ENCODE measurements at regions of chrX and their contacts with region 1.

Region 1: DNA sequence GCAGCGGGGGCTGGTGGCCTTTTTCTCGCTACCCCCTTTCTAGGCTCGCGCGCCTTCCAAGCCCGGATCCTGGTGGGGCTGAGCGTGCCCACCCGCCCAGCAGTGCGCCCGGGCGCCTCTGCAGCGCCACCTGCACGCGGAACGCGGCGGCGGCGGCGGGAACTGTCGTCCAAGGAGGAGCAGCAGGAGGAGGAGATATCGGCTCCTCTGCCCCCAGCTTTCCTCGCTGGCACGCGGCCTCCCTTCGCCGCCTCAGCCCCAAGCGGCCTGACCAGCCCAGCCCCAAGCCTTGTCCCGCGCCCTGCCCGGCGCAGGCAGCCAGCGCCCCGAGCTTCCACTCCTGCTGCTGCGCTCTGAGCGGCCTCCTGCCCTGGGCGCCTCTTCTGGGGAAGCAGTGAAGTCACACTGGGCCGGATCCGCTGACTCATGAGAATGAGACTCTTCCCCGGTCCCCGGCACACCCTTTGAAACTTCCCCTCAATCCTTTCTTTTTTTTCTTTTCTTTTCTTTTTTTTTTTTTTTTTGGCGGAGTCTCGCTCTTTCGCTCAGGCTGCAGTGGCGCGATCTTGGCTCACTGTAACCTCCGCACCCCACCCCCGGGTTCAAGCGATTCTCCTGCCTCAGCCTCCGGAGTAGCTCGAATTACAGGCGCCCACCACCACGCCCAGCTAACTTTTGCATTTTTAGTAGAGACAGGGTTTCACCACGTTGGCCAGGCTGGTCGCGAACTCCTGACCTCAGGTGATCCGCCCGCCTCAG is 10.6 kb upstream of the ELF4 start:
- DNase-seq: peak; percentile 32 to 81 (median 65)
- ATAC-seq: peak; percentile 86
- H3K4me3 ChIP-seq: peak overlapping the region; percentile 46 to 48
- H3K4me3 Mint-ChIP-seq: peak overlapping the region; percentile 73
- H3K27ac ChIP-seq: no peak overlapping the region
- H3K27ac Mint-ChIP-seq: no peak overlapping the region
- H3K4me1 ChIP-seq: no peaks in the 10 kb centered on the region
- H3K4me1 Mint-ChIP-seq: peaks cover 7% of the 10 kb centered on the region
- H3K27me3 ChIP-seq: no peaks in the 10 kb centered on the region
- H3K27me3 Mint-ChIP-seq: no peaks in the 10 kb centered on the region
- CTCF ChIP-seq: peak; percentile 73

Region 2: GRCh38 chrX:130091958-130092522 is 28.9 kb before region 1 on chrX:
- CTCF ChIA-PET with region 1: interaction called, 9 read pairs
- POLR2A ChIA-PET with region 1: interaction called, 7 read pairs
- intact Hi-C with region 1: loop called in 1 of 2 experiments (anchors 1 kb)
- DNase-seq: peak; percentile 69 to 95 (median 83)
- ATAC-seq: peak; percentile 97
- H3K4me3 ChIP-seq: peak overlapping the region; percentile 50 to 58
- H3K4me3 Mint-ChIP-seq: peak overlapping the region; percentile 81
- H3K27ac ChIP-seq: peak overlapping the region; percentile 54 to 70
- H3K27ac Mint-ChIP-seq: peak overlapping the region; percentile 93
- H3K4me1 ChIP-seq: peaks cover 67% of the 10 kb centered on the region
- H3K4me1 Mint-ChIP-seq: peaks cover 58% of the 10 kb centered on the region
- H3K27me3 ChIP-seq: no peaks in the 10 kb centered on the region
- H3K27me3 Mint-ChIP-seq: no peaks in the 10 kb centered on the region
- CTCF ChIP-seq: no peak

Region 3: DNA sequence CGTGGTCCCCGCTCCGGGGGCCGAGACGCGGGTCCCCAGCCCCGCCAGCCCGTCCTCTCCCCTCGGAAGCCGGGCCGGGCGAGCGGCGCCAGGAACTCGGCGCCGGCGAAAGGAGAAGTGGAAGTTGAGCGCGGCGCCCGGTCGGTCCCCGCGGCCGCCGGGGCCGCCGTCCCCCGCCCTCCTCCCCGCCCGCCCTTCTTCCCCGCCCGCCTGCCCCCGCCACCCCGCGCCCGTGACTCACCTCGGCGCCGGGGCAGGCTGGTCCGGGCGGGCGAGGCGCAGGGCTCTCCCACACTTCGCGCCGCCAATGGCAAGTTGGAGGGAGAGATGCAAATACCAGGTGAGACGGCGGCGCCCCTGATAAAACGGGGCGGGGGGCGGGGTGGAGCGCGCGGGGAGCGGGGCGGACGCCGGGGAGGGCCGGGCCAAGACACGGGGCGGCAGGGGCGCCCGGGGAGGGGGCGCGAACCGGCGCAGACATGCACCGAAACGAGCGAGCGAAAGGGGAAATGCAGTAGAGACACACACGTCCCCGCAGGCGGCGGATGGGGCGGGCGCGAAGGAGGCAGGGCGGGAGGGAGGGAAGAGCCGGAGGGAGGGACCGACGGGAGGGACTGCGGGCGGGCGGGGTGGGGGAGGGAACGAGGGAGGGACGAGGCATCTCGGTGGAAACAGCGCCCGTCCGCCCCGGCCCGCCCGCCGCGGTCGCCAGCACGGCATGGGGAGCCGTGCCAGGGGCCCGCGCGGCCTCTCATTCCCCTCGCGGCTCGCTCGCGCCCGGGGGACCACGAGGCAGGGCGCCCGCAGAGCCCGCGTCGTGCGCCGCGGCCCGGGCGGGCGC is 10.3 kb before region 1 on chrX and contains the start of gene ELF4:
- CTCF ChIA-PET with region 1: interaction called, 17 read pairs
- POLR2A ChIA-PET with region 1: no interaction called
- intact Hi-C with region 1: no loop called
- DNase-seq: peak in 8 of 9 experiments; percentile 38 to 83 (median 65)
- ATAC-seq: peak; percentile 75
- H3K4me3 ChIP-seq: peak within 1 kb of the TSS; percentile 54 to 58
- H3K4me3 Mint-ChIP-seq: peak within 1 kb of the TSS; percentile 87
- H3K27ac ChIP-seq: peak within 1 kb of the TSS; percentile 35 to 73
- H3K27ac Mint-ChIP-seq: peak within 1 kb of the TSS; percentile 94
- H3K4me1 ChIP-seq: peaks cover 10% of the 10 kb centered on the region
- H3K4me1 Mint-ChIP-seq: peaks cover 30% of the 10 kb centered on the region
- H3K27me3 ChIP-seq: no peaks in the 10 kb centered on the region
- H3K27me3 Mint-ChIP-seq: no peaks in the 10 kb centered on the region
- CTCF ChIP-seq: no peak
- total RNA-seq, gene ELF4: 11.7 to 13.8 TPM

Region 4: GRCh38 chrX:130165703-130166502 is 45.0 kb after region 1 on chrX and contains the start of gene AIFM1:
- CTCF ChIA-PET with region 1: no interaction called
- POLR2A ChIA-PET with region 1: no interaction called
- intact Hi-C with region 1: loop called in 1 of 2 experiments (anchors 2 kb)
- DNase-seq: peak; percentile 68 to 95 (median 85)
- ATAC-seq: peak; percentile 87
- H3K4me3 ChIP-seq: peak within 1 kb of the TSS; percentile 57 to 74
- H3K4me3 Mint-ChIP-seq: peak within 1 kb of the TSS; percentile 90
- H3K27ac ChIP-seq: peak within 1 kb of the TSS; percentile 54 to 80
- H3K27ac Mint-ChIP-seq: peak within 1 kb of the TSS; percentile 90
- H3K4me1 ChIP-seq: peaks cover 17% of the 10 kb centered on the region
- H3K4me1 Mint-ChIP-seq: peaks cover 42% of the 10 kb centered on the region
- H3K27me3 ChIP-seq: no peaks in the 10 kb centered on the region
- H3K27me3 Mint-ChIP-seq: no peaks in the 10 kb centered on the region
- CTCF ChIP-seq: no peak
- total RNA-seq, gene AIFM1: 4.4 to 4.9 TPM

Region 5: DNA sequence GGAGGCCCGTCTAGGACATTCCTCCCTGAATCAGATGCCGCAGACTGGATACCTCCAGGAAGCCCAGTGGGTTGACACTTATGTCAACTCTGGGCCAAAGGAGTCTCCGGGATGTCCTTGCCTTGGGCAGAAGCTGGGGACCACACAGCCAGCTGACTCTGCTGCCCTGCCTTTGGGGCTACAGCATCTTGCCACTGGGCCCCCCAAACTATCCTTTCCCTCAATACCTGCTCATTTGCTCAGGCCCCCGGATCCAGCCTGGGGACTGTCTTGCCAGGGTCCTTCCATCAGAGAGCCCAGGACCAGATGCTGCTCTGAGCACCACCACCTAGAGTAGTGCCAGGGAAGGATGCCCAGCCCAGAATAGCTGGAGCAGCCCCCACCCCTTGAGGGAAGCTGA is 69.9 kb after region 1 on chrX:
- CTCF ChIA-PET with region 1: interaction called, 6 read pairs
- POLR2A ChIA-PET with region 1: no interaction called
- intact Hi-C with region 1: loop called in 1 of 2 experiments (anchors 5 kb)
- DNase-seq: no peak
- ATAC-seq: no peak
- H3K4me3 ChIP-seq: no peak overlapping the region
- H3K4me3 Mint-ChIP-seq: no peak overlapping the region
- H3K27ac ChIP-seq: no peak overlapping the region
- H3K27ac Mint-ChIP-seq: no peak overlapping the region
- H3K4me1 ChIP-seq: no peaks in the 10 kb centered on the region
- H3K4me1 Mint-ChIP-seq: peaks cover 2% of the 10 kb centered on the region
- H3K27me3 ChIP-seq: no peaks in the 10 kb centered on the region
- H3K27me3 Mint-ChIP-seq: no peaks in the 10 kb centered on the region
- CTCF ChIP-seq: no peak

Measured in CD8-positive, alpha-beta T cell (primary cell).